ENCODE measurements at regions of chr2 and their contacts with region 1.

Region 1: GRCh38 chr2:3518496-3519254 is 656 bp downstream of the ADI1 start:
- DNase-seq: peak; percentile 87 to 99
- H3K4me3 ChIP-seq: peak overlapping the region; percentile 95
- H3K27ac ChIP-seq: peak overlapping the region; percentile 85
- H3K4me1 ChIP-seq: peaks cover 20% of the 10 kb centered on the region
- H3K27me3 ChIP-seq: no peaks in the 10 kb centered on the region
- CTCF ChIP-seq: no peak

Region 2: DNA sequence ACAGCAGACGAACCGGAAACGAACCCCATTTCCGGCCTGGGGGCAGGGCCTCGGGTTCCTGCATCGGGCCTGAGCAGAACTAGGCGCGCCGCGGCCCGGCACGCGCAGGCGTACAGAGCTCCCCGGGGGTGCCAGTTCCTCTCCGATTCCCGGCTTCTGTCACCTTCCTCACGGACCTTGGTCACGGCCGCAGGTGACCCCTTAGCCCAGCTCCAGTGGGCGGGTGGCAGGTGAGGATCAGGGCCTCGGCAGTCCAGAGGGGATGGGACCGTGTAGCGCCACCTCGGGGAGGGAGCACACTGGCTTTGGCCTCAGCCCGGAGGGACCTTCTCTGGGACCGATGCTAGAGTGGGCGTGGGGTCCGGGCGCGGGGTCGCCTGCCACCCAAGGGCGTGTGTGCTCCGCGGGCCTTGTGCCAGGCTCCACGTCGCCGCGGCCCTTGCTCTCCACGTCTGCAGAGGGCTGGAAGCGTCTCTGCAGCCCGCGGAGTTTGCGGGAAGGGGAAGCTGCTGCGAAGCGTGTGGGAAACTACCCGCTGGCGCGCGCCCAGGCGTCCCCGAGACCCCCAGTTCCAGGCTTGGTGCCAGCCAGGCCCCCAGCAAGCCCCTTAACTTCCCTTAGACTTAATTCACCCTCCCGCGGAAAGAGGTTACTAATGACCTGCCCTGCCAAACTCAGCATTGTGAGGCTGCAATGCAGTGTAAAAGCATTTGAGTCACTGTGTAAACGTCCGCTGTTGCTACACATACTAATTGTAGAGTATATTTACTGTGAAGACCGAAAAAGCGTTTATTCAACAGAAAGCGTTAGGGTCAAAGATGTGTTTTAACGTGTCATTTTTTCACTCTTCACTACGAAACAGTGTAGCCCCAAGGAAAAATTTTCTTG is 138.8 kb before region 1 on chr2 and contains the start of gene TRAPPC12:
- CTCF ChIA-PET with region 1: no interaction called
- POLR2A ChIA-PET with region 1: no interaction called
- intact Hi-C with region 1: loop called (anchors 5 kb)
- DNase-seq: peak; percentile 88 to 93
- H3K4me3 ChIP-seq: peak within 1 kb of the TSS; percentile 85
- H3K27ac ChIP-seq: peak within 1 kb of the TSS; percentile 80
- H3K4me1 ChIP-seq: peaks cover 30% of the 10 kb centered on the region
- H3K27me3 ChIP-seq: no peaks in the 10 kb centered on the region
- CTCF ChIP-seq: peak; percentile 51; the same call in 1 of the 2 replicates
- total RNA-seq, gene TRAPPC12: 69.3 and 77.6 TPM in 2 replicates

Region 3: DNA sequence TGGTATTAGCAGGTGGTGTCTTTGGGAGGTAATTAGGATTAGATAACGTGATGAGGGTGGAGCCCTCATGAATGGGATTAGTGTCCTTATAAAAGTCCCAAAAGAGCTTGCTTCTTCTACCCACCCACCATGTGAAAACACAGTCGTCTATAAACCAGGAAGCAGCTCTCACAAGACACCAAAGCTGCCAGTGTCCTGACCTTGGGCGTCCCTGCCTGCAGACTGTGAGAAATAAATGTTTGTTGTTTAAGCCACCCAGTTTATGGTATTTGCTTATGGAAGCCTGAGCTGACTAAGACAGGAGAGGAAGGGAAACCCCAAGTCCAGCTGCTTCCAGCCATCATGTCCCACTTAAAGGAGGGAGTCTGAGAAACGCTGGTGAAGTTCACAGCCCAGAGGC is 12.9 kb before region 1 on chr2:
- CTCF ChIA-PET with region 1: no interaction called
- POLR2A ChIA-PET with region 1: no interaction called
- intact Hi-C with region 1: no loop called
- DNase-seq: no peak
- H3K4me3 ChIP-seq: no peak overlapping the region
- H3K27ac ChIP-seq: no peak overlapping the region
- H3K4me1 ChIP-seq: no peaks in the 10 kb centered on the region
- H3K27me3 ChIP-seq: no peaks in the 10 kb centered on the region
- CTCF ChIP-seq: no peak

Region 4: DNA sequence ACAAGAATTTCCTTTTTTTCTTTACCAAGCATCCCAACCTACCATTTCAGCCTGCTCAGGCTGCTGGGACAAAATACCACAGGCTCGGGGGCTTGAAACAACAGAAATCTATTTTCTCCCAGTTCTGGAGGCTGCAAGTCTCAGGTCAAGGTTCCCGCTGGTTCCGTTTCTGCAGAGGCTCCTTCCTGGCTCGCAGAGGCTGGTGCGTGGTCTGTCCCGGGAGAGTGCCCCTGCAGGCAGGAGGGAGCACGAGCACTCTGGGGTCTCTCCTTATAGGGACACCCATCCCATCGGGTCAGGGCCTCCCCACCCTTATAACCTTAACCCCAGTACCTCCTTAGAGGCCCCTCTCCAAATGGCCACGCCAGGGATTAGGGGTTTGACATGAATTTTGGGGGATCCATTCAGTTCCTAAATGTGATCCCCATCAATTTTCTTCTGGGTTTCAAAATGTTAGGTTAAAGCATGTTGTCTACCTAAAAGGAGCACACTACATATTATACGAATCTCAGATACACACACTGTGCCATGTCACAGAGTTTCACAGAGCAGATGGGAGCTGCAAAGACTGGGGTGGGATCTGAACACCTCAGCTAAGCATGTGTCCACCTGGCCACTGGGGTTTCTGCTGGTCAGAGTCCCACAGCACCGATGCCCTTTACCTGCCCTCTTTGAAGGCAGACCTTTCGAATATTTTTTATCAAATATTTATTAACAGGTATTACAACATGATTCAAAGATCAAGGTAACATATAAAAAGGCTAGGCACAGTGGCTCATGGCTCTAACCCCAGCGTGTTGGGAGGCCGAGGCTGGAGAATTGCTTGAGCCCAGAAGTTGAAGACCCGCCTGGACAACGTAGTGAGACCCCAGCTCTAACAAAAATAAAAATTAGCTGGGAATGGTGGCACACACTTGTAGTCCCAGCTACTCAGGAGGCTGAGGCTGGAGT is 18.3 kb after region 1 on chr2:
- CTCF ChIA-PET with region 1: no interaction called
- POLR2A ChIA-PET with region 1: interaction called, 3 read pairs
- intact Hi-C with region 1: loop called (anchors 1 kb)
- DNase-seq: peak in 1 of 2 experiments; percentile 41
- H3K4me3 ChIP-seq: peak overlapping the region; percentile 54
- H3K27ac ChIP-seq: peak overlapping the region; percentile 88
- H3K4me1 ChIP-seq: peaks cover 30% of the 10 kb centered on the region
- H3K27me3 ChIP-seq: no peaks in the 10 kb centered on the region
- CTCF ChIP-seq: peak; percentile 46

Region 5: GRCh38 chr2:3558205-3559014 is 39.7 kb after region 1 on chr2 and contains the start of gene RNASEH1:
- CTCF ChIA-PET with region 1: no interaction called
- POLR2A ChIA-PET with region 1: interaction called, 9 read pairs
- intact Hi-C with region 1: loop called (anchors 1 kb)
- DNase-seq: peak; percentile 97 to 98
- H3K4me3 ChIP-seq: peak within 1 kb of the TSS; percentile 81
- H3K27ac ChIP-seq: peak within 1 kb of the TSS; percentile 89
- H3K4me1 ChIP-seq: peaks cover 21% of the 10 kb centered on the region
- H3K27me3 ChIP-seq: no peaks in the 10 kb centered on the region
- CTCF ChIP-seq: no peak
- total RNA-seq, gene RNASEH1: 28.4 and 31.0 TPM in 2 replicates

Measured in PC-9 (cell line).